PC-9 (cell line): ENCODE measurements at regions of chr13 and their contacts with region 1.

Region 1: DNA sequence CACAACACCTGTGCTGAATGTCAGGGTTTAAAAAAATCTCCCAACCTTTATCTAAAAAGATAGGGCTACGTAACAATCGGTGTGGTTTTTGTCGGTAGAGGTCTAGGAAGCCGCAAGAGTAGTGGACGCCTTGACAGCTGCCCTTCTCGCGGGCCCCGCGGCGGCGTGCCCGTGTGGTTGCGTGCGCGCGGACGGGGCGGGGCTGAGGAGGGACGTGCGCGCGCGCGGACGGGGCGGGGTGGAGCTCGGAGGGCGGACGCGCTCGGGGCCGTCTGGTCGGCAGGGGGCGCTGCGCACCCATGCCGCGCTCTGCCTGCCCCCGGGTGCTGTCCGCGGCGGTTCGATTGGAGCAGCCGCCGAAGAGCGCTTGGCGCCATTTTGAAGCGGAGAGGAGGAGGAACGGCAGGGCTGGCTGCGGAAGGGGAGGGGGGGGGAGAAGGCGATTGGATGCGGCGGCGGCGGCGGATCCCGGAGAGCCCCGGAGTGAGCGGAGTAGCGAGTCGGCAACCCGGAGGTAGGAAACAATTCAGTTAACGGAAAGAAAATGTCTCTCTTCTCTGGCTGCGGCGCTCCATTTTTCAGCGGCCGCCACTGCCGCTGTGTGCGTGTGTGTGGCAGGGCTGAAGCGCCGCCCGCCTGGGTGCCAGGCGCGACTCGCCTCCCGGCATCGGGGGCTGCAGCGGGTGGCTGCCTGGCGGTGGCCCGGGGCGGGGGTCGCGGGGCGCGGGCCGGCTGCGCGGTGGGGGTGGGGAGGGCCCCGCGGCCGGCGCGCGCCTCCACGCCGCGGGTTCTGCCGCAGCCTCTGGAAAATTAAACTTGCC is at the start of gene PDS5B:
- DNase-seq: peak; percentile 81 to 91
- H3K4me3 ChIP-seq: peak within 1 kb of the TSS; percentile 71
- H3K27ac ChIP-seq: peak within 1 kb of the TSS; percentile 72
- H3K4me1 ChIP-seq: peaks cover 30% of the 10 kb centered on the region
- H3K27me3 ChIP-seq: no peaks in the 10 kb centered on the region
- CTCF ChIP-seq: peak; percentile 69
- total RNA-seq, gene PDS5B: 37.1 and 37.6 TPM in 2 replicates

Region 2: DNA sequence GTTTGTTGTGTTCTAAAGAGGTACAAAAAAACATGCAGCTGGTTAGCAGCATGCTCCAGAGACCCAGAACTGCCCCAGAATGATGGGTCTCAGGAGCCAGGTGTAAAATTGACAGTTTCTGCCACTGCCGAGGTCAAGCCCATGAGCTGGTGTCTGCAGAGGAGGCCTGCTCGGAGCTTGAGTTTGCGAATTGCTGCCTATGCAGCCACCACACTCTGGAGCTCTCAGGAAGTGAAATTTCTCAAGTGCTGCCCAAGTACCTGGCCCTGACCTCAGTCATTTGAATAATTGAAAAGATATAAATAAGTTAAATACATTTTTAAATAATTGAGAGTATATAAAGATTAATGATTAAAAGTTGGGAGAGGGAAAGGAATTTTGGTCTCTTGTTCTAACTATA is 337.5 kb before region 1 on chr13:
- CTCF ChIA-PET with region 1: no interaction called
- POLR2A ChIA-PET with region 1: no interaction called
- intact Hi-C with region 1: no loop called
- DNase-seq: no peak
- H3K4me3 ChIP-seq: no peak overlapping the region
- H3K27ac ChIP-seq: no peak overlapping the region
- H3K4me1 ChIP-seq: no peaks in the 10 kb centered on the region
- H3K27me3 ChIP-seq: no peaks in the 10 kb centered on the region
- CTCF ChIP-seq: no peak

Region 3: GRCh38 chr13:32315238-32316027 is 270.9 kb before region 1 on chr13 and contains the starts of genes BRCA2 and ZAR1L:
- CTCF ChIA-PET with region 1: no interaction called
- POLR2A ChIA-PET with region 1: no interaction called
- intact Hi-C with region 1: loop called (anchors 2 kb)
- DNase-seq: peak; percentile 74 to 80
- H3K4me3 ChIP-seq: peak within 1 kb of the TSS; percentile 95
- H3K27ac ChIP-seq: peak within 1 kb of the TSS; percentile 95
- H3K4me1 ChIP-seq: peaks cover 16% of the 10 kb centered on the region
- H3K27me3 ChIP-seq: no peaks in the 10 kb centered on the region
- CTCF ChIP-seq: no peak
- total RNA-seq, gene BRCA2: 11.4 and 14.5 TPM in 2 replicates
- total RNA-seq, gene ZAR1L: 0.37 and 0.43 TPM in 2 replicates

Region 4: DNA sequence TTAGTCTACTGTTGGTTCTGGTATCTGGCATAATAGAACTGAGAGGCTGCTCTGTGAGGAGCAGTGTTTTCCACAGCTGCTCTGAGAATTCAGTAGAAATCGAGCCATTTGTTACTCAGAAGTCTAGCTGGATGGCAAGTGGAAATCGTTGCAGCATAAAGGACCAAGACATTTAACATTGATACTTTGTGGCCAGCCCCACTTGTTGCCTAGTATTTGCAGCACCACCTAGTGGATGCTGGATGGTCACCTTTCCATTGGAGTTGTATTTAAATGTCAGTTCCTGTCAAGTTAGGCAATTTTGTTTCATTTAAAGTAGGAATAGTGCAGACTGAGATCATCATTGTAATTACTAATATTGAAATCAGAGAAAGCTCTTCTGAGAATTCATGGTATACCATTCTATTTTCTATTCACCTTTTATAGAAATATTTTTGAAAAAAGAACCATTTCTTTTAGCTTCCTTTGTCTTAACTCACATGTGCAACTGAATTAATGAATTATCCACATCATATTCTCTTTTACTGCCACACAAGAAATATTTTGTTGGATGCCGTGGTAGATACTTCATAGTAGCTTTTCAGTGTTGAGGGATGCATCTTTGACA is 64.5 kb after region 1 on chr13:
- CTCF ChIA-PET with region 1: no interaction called
- POLR2A ChIA-PET with region 1: no interaction called
- intact Hi-C with region 1: loop called (anchors 2 kb)
- DNase-seq: peak; percentile 14 to 46
- H3K4me3 ChIP-seq: no peak overlapping the region
- H3K27ac ChIP-seq: no peak overlapping the region
- H3K4me1 ChIP-seq: no peaks in the 10 kb centered on the region
- H3K27me3 ChIP-seq: no peaks in the 10 kb centered on the region
- CTCF ChIP-seq: peak; percentile 74

Region 5: DNA sequence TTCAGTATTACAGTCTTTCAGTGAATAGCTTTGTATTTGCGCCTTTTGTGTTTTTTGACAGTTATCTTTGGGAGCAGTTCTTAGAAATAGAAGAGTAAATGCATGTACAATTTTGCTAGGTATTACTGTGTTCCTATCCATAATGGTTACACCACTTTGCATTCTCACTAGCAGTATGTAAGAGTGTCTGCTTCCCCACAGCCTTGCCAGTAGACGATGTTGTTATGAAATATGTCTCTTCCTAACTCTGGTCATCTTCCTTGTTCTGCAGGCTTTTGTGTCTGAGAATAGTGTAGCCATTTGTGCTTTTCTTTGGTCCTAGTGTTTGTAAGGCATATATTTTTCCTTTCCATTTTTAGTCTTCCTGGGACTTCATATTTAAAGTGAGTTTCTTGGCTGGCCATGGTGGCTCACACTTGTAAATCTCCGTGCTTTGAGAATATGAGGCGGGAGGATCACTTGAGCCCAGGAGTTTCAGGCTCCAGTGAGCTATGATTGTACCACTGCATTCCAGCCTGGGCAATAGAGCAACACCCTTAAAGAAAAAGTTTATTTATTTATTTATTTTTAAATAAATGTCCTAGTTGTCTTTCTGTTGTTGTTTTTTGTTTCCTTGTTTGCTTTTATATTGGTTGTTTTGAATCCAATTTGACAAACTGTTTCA is 140.2 kb after region 1 on chr13:
- CTCF ChIA-PET with region 1: interaction called, 19 read pairs
- POLR2A ChIA-PET with region 1: no interaction called
- intact Hi-C with region 1: no loop called
- DNase-seq: no peak
- H3K4me3 ChIP-seq: no peak overlapping the region
- H3K27ac ChIP-seq: no peak overlapping the region
- H3K4me1 ChIP-seq: no peaks in the 10 kb centered on the region
- H3K27me3 ChIP-seq: no peaks in the 10 kb centered on the region
- CTCF ChIP-seq: no peak

Region 6: DNA sequence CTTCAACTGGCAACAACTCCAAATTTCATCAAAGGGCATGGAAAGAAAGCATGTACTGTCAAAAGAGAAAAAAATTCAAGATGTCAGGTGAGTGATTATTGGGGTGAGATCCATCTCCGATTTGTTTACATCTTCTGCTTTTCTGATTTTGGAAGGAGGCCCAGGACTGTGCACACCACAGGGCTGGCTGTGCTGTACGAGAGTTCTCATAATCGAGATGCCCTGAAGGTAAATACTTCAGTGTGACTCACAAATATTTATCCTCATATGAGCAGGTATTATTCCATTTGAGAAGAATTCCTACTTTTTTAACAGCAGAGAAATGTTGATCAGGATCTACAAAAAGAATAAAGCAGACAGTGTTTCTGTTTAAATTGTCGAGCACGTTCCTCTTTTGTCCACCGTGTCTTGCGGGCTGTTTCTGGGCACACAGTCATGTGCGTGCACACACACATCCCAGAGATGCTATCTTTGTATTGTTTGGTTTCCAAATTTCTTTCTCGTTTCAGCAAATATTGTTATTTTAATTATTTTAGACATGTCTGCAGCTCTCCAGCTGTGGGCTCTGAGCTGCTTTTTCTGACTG is 533.7 kb after region 1 on chr13:
- CTCF ChIA-PET with region 1: no interaction called
- POLR2A ChIA-PET with region 1: interaction called, 8 read pairs
- intact Hi-C with region 1: loop called (anchors 5 kb)
- DNase-seq: peak; percentile 62 to 97
- H3K4me3 ChIP-seq: peak overlapping the region; percentile 32; the same call in 1 of the 2 replicates
- H3K27ac ChIP-seq: peak overlapping the region; percentile 98
- H3K4me1 ChIP-seq: peaks cover 65% of the 10 kb centered on the region
- H3K27me3 ChIP-seq: no peaks in the 10 kb centered on the region
- CTCF ChIP-seq: no peak

Region 7: GRCh38 chr13:33723772-33724435 is 1137.6 kb after region 1 on chr13:
- CTCF ChIA-PET with region 1: no interaction called
- POLR2A ChIA-PET with region 1: no interaction called
- intact Hi-C with region 1: loop called (anchors 1 kb)
- DNase-seq: peak; percentile 47 to 75
- H3K4me3 ChIP-seq: no peak overlapping the region
- H3K27ac ChIP-seq: no peak overlapping the region
- H3K4me1 ChIP-seq: peaks cover 7% of the 10 kb centered on the region; the same call in 1 of the 2 replicates
- H3K27me3 ChIP-seq: no peaks in the 10 kb centered on the region
- CTCF ChIP-seq: peak; percentile 83